ENCODE measurements at regions of chr19 and their contacts with region 1.

Region 1: GRCh38 chr19:18281082-18282020 is at the start of gene JUND:
- DNase-seq: peak; percentile 62 to 98
- ATAC-seq: peak; percentile 64 to 72
- H3K4me3 ChIP-seq: peak within 1 kb of the TSS; percentile 97
- H3K27ac ChIP-seq: peak within 1 kb of the TSS; percentile 96 to 99
- H3K4me1 ChIP-seq: peaks cover 26% of the 10 kb centered on the region
- CTCF ChIP-seq: no peak
- EP300 ChIP-seq: no peak
- POLR2A ChIP-seq: peak; percentile 92
- RAD21 ChIP-seq: no peak
- polyA plus RNA-seq, gene JUND: 52.9 and 68.9 TPM in 2 replicates

Region 2: GRCh38 chr19:18173572-18174288 is 107.6 kb before region 1 on chr19 and contains the start of gene IFI30:
- CTCF ChIA-PET with region 1: no interaction called
- POLR2A ChIA-PET with region 1: no interaction called
- DNase-seq: peak; percentile 45 to 68
- ATAC-seq: peak; percentile 70 to 89
- H3K4me3 ChIP-seq: peak within 1 kb of the TSS; percentile 62
- H3K27ac ChIP-seq: peak within 1 kb of the TSS; percentile 52 to 77
- H3K4me1 ChIP-seq: peaks cover 4% of the 10 kb centered on the region; the same call in 1 of the 3 replicates
- CTCF ChIP-seq: no peak
- EP300 ChIP-seq: no peak
- POLR2A ChIP-seq: peak; percentile 73
- RAD21 ChIP-seq: no peak
- polyA plus RNA-seq, gene IFI30: 11.2 and 12.3 TPM in 2 replicates

Region 3: DNA sequence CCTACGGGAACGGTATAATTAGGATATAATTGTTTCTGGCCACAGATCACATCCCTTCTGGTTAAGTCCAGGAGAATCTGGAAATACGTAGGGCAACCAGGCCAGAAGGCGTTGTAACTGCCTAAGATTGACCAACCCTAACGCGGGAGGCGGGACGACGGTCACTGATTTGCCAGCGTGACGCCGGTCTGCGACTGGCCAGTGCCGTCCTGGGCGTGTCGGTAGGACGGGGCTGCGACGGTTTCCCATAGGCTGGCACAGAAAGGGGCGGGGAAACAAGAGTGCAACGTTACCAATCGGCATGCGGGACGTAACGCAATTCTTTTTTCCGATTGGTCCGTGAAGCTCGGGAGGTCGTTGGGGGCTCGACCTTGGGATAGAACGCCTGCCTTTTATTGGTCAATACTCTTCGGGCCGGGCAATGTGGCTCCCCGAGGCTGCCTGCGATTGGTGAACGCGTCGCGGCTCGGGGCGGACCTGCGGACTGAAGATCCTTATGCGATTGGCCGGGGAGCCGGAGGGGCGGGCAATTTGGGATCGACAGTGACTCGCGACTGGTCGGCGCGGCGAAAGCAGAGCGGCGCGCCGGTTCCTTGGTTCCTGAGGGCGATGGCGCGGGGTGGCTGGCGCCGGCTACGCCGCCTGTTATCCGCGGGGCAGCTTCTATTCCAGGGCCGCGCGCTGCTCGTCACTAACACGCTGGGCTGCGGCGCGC is 88.5 kb before region 1 on chr19 and contains the start of gene MPV17L2:
- CTCF ChIA-PET with region 1: interaction called, 11 read pairs
- POLR2A ChIA-PET with region 1: interaction called, 9 read pairs
- DNase-seq: peak; percentile 70 to 99
- ATAC-seq: peak; percentile 92 to 94
- H3K4me3 ChIP-seq: peak within 1 kb of the TSS; percentile 65
- H3K27ac ChIP-seq: peak within 1 kb of the TSS; percentile 62 to 87
- H3K4me1 ChIP-seq: peaks cover 14% of the 10 kb centered on the region; the same call in 2 of the 3 replicates
- CTCF ChIP-seq: no peak
- EP300 ChIP-seq: no peak
- POLR2A ChIP-seq: peak; percentile 61
- RAD21 ChIP-seq: no peak
- polyA plus RNA-seq, gene MPV17L2: 8.3 and 11.4 TPM in 2 replicates

Region 4: GRCh38 chr19:18251587-18252369 is 29.6 kb before region 1 on chr19:
- CTCF ChIA-PET with region 1: interaction called, 14 read pairs
- POLR2A ChIA-PET with region 1: interaction called, 4 read pairs
- DNase-seq: peak; percentile 53 to 70
- ATAC-seq: peak; percentile 78 to 85
- H3K4me3 ChIP-seq: no peak overlapping the region
- H3K27ac ChIP-seq: no peak overlapping the region
- H3K4me1 ChIP-seq: no peaks in the 10 kb centered on the region
- CTCF ChIP-seq: peak; percentile 77
- EP300 ChIP-seq: no peak
- POLR2A ChIP-seq: no peak
- RAD21 ChIP-seq: peak; percentile 88 to 96

Region 5: DNA sequence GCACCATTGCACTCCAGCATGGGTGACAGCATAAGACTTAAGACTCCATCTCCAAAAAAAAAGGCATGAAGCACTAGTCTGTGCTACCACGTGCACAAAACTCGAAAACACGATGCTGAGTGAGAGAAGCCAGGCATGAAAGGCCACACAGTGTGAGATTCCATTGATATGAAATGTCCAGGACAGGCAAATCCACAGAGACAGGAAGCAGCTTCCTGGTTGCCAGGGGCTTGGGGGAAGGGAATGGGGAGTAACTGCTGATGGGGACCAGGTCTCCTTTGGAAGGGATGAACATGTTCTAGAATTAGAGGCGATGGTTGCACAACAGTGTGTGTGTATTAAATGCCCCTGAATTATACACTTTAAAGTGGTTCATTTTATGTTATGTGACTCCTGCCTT is 16.0 kb after region 1 on chr19:
- CTCF ChIA-PET with region 1: interaction called, 57 read pairs
- POLR2A ChIA-PET with region 1: interaction called, 235 read pairs
- DNase-seq: no peak
- ATAC-seq: no peak
- H3K4me3 ChIP-seq: no peak overlapping the region
- H3K27ac ChIP-seq: peak overlapping the region; percentile 37 to 99; a peak in 3 of 6 replicates
- H3K4me1 ChIP-seq: peaks cover 43% of the 10 kb centered on the region
- CTCF ChIP-seq: no peak
- EP300 ChIP-seq: no peak
- POLR2A ChIP-seq: no peak
- RAD21 ChIP-seq: no peak

Region 6: GRCh38 chr19:18322759-18323460 is 41.6 kb after region 1 on chr19 and contains the start of gene LSM4:
- CTCF ChIA-PET with region 1: interaction called, 158 read pairs
- POLR2A ChIA-PET with region 1: interaction called, 121 read pairs
- DNase-seq: peak; percentile 94 to 97
- ATAC-seq: peak; percentile 97
- H3K4me3 ChIP-seq: peak within 1 kb of the TSS; percentile 60
- H3K27ac ChIP-seq: peak within 1 kb of the TSS; percentile 93
- H3K4me1 ChIP-seq: peaks cover 40% of the 10 kb centered on the region
- CTCF ChIP-seq: no peak
- EP300 ChIP-seq: no peak
- POLR2A ChIP-seq: peak; percentile 62
- RAD21 ChIP-seq: peak; percentile 21 to 33; a peak in 3 of 5 replicates
- polyA plus RNA-seq, gene LSM4: 106 and 154 TPM in 2 replicates

Region 7: GRCh38 chr19:18388100-18388959 is 107.0 kb after region 1 on chr19:
- CTCF ChIA-PET with region 1: interaction called, 4 read pairs
- POLR2A ChIA-PET with region 1: interaction called, 29 read pairs
- DNase-seq: peak in 1 of 2 experiments; percentile 72
- ATAC-seq: peak in 1 of 2 experiments; percentile 32; a peak in 3 of 6 replicates
- H3K4me3 ChIP-seq: peak overlapping the region; percentile 98
- H3K27ac ChIP-seq: peak overlapping the region; percentile 97 to 99
- H3K4me1 ChIP-seq: peaks cover 26% of the 10 kb centered on the region
- CTCF ChIP-seq: peak; percentile 68
- EP300 ChIP-seq: no peak
- POLR2A ChIP-seq: no peak
- RAD21 ChIP-seq: peak; percentile 49 to 54; a peak in 4 of 5 replicates